Psoas muscle (tissue), 8 donors: ENCODE measurements at regions of chr6 and their contacts with region 1.

Region 1: DNA sequence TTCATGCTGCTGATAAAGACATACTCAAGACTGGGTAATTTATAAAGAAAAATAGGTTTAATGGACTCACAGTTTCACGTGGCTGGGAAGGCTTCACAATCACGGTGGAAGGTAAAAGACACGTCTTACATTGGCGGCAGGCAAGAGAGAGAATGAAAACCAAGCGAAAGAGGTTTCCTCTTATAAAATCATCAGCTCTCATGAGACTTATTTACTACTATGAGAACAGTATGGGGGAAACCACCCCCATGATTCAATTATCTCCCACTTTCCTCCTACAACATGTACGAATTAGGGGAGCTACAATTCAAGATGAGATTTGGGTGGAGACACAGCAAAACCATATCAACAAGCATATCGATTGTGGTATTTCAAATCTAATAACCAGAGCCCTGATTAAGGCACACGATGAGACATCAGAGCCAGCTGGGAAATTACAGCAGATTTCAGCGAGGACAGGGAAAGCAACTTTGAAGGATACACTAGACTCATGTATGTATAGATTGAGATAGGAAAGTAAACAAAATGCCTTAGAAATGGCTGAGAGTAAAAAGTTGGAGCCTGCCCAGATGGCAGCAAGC is 129.8 kb upstream of the GJE1 start:
- DNase-seq: no peak
- ATAC-seq: no peak
- H3K4me3 ChIP-seq: no peak overlapping the region
- H3K27ac ChIP-seq: no peak overlapping the region
- H3K4me1 ChIP-seq: no peaks in the 10 kb centered on the region
- H3K27me3 ChIP-seq: no peaks in the 10 kb centered on the region
- CTCF ChIP-seq: no peak

Region 2: DNA sequence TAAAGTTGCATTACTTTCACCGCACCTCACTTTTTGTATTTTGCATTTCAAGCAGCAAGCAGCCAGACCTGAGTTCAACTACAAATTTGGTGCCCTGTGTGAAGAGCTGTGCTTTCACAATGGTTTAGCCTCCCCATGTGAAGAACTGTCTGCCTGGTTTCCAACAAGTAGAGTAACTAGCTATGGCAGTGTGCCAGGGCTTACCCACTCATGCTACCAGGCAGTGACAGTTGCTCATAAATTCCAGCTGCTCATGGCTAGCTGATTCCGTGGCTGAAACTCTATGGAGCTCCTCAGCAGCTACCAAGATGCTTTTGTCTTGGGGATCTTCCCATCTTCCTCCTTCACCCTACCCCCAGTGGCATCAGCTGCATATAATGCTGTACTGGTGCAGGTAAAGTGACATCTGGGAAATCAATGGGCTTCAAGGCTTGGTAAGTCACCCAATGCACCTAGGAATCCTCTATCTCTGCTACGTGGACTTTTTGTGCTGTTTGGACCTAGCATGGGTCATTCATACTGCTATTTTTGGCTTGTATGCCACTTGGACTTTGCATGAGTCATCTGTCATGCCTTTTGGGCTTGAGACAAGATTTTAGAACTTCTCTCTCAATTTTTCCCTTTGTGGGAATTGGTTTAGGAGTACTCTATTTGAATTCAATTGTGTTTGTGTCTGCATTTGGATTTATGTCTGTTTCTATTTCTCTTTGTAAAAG is 46.7 kb before region 1 on chr6:
- intact Hi-C with region 1: loop called in 1 of 2 experiments (anchors 1 kb)
- DNase-seq: no peak
- ATAC-seq: no peak
- H3K4me3 ChIP-seq: no peak overlapping the region
- H3K27ac ChIP-seq: no peak overlapping the region
- H3K4me1 ChIP-seq: no peaks in the 10 kb centered on the region
- H3K27me3 ChIP-seq: peaks cover 0 to 4% (median 0%) of the 10 kb centered on the region in 3 donors
- CTCF ChIP-seq: no peak

Region 3: GRCh38 chr6:142045380-142046278 is 42.7 kb after region 1 on chr6:
- intact Hi-C with region 1: no loop called
- DNase-seq: no peak
- ATAC-seq: no peak
- H3K4me3 ChIP-seq: no peak overlapping the region
- H3K27ac ChIP-seq: no peak overlapping the region
- H3K4me1 ChIP-seq: no peaks in the 10 kb centered on the region
- H3K27me3 ChIP-seq: no peaks in the 10 kb centered on the region
- CTCF ChIP-seq: no peak

Region 4: DNA sequence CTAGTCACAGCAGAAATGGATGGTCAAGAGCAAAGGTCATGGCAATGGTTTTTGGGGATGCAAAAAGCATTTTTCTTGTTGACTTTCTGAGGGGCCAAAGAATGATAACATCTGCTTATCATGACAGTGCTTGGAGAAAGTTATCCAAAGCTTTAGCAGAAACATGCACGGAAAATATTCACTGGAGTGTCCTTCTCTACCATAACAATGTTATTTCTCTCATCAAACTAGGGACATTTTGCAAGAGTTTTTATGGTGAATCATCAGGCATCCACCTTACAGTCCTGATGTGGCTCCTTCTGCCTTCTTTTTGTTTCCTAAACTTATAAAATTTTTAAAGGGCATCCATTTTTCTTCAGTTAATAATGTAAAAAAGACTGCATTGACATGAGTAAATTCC is 639.7 kb after region 1 on chr6:
- intact Hi-C with region 1: no loop called
- DNase-seq: no peak
- ATAC-seq: no peak
- H3K4me3 ChIP-seq: no peak overlapping the region
- H3K27ac ChIP-seq: no peak overlapping the region
- H3K4me1 ChIP-seq: no peaks in the 10 kb centered on the region
- H3K27me3 ChIP-seq: peaks cover 0 to 4% (median 0%) of the 10 kb centered on the region in 3 donors
- CTCF ChIP-seq: no peak